ENCODE measurements at regions of chr12 and their contacts with region 1.

Region 1: DNA sequence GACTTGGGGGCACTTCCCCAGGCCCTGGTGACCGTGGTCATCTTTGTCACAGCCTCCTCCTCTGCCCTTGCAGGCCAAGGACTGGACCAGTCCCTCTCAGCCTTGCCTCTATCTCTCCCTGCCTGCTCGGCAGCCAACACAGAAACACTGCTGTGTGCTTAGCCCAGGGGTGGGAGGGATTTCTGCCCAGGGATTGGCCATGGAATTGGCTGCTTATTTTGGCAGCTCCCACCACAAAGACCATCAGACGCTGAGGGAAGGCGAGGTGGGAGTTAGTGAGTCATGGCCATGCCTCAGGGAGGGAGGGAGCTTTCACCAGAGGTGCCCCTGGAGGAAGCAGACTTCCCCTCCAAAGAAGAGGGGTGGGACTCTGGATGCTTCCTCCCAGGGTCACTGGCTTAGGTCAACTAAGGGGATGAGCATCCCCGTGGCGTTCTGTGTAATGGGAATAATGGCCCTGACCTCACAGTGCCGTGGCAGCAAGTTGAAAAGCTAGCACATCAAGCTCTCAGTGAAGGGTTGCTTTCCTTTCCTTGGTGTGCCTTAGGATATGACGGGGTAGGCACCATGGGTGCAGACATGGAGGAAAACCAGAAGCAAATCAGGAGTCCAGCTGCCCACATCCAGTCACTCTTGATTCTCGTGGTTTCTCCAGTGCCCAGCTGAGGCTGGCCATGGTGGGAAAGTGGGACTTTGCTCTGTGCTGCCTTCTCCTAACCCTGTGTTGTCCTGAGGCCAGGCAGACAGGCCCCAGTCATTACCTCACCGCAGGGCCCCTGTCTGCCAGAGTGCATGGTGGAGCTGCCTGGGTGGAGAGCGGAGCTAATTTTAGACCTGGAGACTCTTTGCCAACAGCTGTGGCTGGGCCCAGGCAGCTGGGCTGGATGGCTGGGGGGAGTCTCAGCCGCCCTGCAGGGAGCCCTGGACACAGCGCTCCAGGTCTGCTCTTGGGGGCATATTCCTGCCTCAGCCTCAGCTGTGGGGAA is 21.4 kb downstream of the B4GALNT3 start:
- DNase-seq: no peak
- H3K4me3 ChIP-seq: no peak overlapping the region
- H3K27ac ChIP-seq: no peak overlapping the region
- H3K4me1 ChIP-seq: no peaks in the 10 kb centered on the region
- H3K27me3 ChIP-seq: peaks cover 3% of the 10 kb centered on the region
- CTCF ChIP-seq: no peak

Region 2: DNA sequence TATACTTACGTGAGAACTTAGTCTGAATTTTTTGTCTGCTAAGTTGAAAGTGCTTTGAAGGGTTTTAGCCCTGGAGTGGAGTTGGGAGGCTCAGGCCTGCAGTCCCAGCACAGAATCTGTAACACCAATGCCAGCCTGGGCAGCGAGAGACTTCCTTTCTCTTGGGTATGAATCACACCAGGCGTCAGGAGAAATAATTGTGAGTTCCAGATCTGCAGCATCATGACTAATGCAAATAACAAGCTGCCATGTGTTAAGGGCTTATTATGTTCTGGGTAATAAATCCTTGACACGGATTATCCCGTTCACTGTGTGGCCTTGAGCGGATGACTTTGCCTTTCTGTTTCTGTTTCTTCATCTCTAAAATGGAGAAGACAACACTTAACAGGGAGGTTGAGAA is 49.2 kb after region 1 on chr12:
- CTCF ChIA-PET with region 1: no interaction called
- dilution Hi-C with region 1: no loop called
- in situ Hi-C with region 1: no loop called
- intact Hi-C with region 1: loop called (anchors 5 kb)
- DNase-seq: peak; percentile 87
- H3K4me3 ChIP-seq: no peak overlapping the region
- H3K27ac ChIP-seq: no peak overlapping the region
- H3K4me1 ChIP-seq: peaks cover 21% of the 10 kb centered on the region
- H3K27me3 ChIP-seq: no peaks in the 10 kb centered on the region
- CTCF ChIP-seq: no peak

Region 3: DNA sequence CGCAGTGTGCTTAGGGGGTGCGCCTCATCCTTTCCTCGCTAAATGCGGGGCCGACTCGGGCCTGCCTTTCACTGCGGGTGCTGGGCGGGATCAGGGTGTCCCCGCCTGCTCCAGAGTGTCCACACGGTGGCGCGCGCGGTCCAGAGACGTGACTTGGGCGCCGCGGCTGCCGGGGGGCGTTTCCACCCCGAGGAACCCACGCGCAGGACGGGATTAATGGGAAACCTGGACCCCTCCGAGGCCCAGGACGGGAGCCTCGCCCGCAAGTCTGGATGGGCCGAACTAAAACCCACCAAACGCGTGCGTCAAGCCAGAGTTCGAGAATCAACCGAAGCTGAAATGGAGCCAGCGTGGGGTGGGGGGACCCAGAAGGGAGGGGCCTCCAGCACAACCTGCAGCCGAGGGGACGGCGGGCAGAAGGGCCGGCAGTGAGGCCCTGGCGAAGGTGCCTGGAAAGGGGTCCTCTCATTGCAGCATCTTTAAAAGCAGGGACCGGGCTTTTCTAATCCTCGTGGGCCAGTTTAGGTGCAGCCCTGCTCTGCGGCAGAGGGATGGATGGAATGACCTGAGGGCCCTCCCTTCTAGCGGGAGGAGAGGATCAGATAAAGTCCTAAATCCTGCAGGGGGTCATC is 88.8 kb after region 1 on chr12:
- CTCF ChIA-PET with region 1: no interaction called
- dilution Hi-C with region 1: no loop called
- in situ Hi-C with region 1: no loop called
- intact Hi-C with region 1: no loop called
- DNase-seq: peak; percentile 77
- H3K4me3 ChIP-seq: peak overlapping the region; percentile 48 to 84 (median 59)
- H3K27ac ChIP-seq: peak overlapping the region; percentile 91
- H3K4me1 ChIP-seq: peaks cover 32% of the 10 kb centered on the region
- H3K27me3 ChIP-seq: no peaks in the 10 kb centered on the region
- CTCF ChIP-seq: peak; percentile 71 to 89

Measured in mammary epithelial cell (primary cell).